Panc1 (cell line): ENCODE measurements at regions of chr1 and their contacts with region 1.

Region 1: DNA sequence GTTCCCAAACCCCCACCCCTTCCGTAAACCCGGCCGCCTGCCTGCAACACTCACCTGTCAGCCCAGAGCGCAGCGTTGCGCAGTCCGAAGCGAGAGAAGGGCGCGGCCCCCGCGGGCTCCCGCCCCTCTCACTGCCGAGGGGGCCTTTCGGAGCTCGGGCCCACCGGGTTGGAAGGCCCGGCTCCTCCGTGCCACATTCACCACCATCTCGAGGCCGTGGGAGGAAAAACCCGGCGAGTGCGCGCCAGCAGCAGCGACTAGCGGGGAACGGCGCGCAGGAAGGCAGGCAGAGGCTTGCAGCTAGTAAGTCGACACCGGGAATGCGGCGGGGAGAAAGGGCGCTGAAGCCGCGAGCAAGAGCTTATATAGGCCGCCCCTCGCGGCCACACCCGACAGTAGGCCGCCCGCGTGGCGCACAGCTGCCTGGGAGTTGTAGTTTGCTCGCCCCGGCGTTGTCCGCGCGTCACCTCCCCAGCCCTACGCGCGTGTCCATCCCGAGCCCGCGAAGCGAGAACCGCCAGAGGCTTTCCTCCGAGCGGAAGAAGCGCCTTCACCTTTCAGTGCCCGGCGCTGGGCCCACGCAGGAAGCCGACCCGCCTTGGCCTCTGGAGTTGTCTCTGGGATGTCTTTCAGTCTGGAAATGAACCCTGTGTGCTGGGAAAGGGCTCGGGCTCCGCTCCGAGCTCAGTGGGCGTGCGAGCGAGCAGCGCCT is 10.4 kb upstream of the RAB42 start:
- DNase-seq: peak; percentile 85
- ATAC-seq: peak; percentile 95
- H3K4me3 ChIP-seq: peak overlapping the region; percentile 89 to 90
- H3K27ac ChIP-seq: peak overlapping the region; percentile 93
- H3K4me1 ChIP-seq: peaks cover 4% of the 10 kb centered on the region
- H3K27me3 ChIP-seq: no peaks in the 10 kb centered on the region
- CTCF ChIP-seq: no peak

Region 2: DNA sequence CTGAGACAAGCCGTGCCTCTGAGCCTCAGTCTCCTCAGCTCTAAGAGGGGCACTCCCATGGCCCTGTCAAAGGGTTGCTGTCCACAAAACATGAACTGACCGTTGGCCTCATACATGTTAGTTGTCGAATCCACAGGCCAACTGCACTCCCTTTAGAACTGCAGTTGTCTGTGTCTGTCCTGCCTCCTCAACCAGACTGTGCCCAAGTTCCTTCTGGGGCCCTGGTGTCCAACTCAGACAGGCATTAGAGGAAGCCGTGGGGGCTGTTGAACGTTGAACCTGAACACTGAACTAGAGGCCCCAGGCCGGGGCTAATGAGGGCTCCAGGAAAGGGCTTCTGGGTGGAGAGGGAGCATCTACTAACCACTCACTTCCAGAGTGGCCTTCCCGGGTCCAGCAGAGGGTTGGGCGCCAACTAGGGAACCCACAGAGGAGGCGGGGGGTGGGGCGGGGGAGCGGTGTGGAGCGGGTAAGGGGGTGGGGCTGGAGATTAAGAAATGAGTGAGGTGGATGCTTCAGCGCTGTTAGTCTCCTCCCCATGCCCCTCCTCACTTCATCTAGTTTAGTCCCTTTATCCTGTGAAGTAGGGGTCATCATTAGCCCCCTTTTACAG is 10.1 kb after region 1 on chr1 and contains the start of gene RAB42:
- CTCF ChIA-PET with region 1: no interaction called
- POLR2A ChIA-PET with region 1: interaction called, 11 read pairs
- in situ Hi-C with region 1: no loop called
- intact Hi-C with region 1: no loop called
- DNase-seq: no peak
- ATAC-seq: peak; percentile 64
- H3K4me3 ChIP-seq: peak within 1 kb of the TSS; percentile 34 to 51
- H3K27ac ChIP-seq: 0 out of 2 replicates have a peak within 1 kb of the TSS, but pooled peaks have one; percentile 18
- H3K4me1 ChIP-seq: no peaks in the 10 kb centered on the region; the same call in 1 of the 2 replicates
- H3K27me3 ChIP-seq: no peaks in the 10 kb centered on the region
- CTCF ChIP-seq: no peak
- total RNA-seq, gene RAB42: 4.2 TPM

Region 3: GRCh38 chr1:28631713-28632112 is 50.0 kb after region 1 on chr1:
- CTCF ChIA-PET with region 1: no interaction called
- POLR2A ChIA-PET with region 1: interaction called, 14 read pairs
- in situ Hi-C with region 1: no loop called
- intact Hi-C with region 1: no loop called
- DNase-seq: no peak
- ATAC-seq: no peak
- H3K4me3 ChIP-seq: no peak overlapping the region
- H3K27ac ChIP-seq: no peak overlapping the region
- H3K4me1 ChIP-seq: no peaks in the 10 kb centered on the region
- H3K27me3 ChIP-seq: no peaks in the 10 kb centered on the region
- CTCF ChIP-seq: no peak

Region 4: DNA sequence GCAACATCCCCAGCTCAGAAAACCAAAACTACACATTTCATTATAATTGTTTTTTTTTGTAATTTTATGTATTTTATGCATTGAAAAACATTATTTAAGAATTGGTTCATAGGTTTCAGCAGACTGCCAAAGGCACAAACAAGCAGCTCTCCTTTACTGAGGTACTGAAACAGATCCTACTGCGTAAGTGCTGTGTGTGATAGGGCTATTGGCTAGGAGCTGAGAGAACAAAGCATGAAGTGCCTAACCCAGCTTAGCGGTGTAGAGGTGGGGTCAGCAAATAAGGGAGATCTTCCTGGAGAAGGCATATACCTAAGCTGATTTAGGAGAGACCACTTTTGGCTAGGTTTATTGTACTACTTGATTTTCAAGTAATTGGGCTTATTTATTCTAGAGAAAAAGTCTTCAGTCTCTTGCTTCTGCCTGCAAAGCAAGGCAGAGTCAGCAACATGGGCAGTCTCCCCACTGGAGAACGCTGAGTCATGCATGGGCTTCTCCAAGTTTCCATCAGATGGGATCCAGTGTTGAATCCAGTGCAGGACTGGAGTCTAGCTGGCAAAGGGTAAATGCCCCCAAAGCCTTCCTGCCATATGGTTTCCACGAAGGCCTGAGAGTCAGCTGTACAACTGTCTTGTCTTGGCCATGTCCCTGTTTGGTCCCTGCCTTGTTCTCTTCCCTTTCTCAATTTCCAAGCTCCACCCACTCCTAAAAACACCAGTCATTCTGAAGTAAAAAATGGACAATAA is 137.1 kb after region 1 on chr1:
- CTCF ChIA-PET with region 1: no interaction called
- POLR2A ChIA-PET with region 1: interaction called, 11 read pairs
- in situ Hi-C with region 1: no loop called
- intact Hi-C with region 1: no loop called
- DNase-seq: no peak
- ATAC-seq: peak; percentile 46; the same call in 1 of the 2 replicates
- H3K4me3 ChIP-seq: no peak overlapping the region
- H3K27ac ChIP-seq: no peak overlapping the region
- H3K4me1 ChIP-seq: no peaks in the 10 kb centered on the region
- H3K27me3 ChIP-seq: no peaks in the 10 kb centered on the region
- CTCF ChIP-seq: no peak